ENCODE measurements at regions of chr3 and their contacts with region 1.

Region 1: DNA sequence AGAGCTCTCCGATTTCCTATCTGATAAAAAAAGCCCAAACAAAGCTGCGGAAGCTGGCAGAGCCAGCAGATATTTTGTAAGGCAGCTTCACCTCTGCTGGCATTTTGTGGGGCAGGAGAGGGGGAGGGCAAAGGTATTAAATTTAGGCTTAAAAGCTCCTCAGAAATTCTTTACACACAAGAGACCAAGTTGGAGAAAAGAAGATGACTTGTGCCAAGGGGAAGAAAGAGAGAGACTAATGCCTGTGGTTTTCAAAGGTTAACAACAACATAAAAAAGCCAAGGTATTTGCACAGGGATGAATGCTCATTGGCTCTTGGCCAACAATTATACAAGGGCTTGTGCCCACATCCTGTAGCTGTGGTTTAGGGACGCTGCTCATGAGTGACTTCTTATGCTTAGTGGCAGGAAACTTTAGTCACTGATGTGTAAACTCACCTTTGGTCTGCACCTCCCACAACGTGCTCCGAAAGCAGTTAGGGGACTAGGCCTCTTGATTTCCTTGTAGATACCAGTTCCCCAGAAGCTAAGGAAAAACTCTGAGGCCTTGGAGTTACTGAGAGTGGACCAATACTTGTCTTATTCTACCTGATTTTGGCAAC is 152.9 kb downstream of the TPRG1 start:
- DNase-seq: peak; percentile 92 to 100
- H3K4me3 ChIP-seq: no peak overlapping the region
- H3K27ac ChIP-seq: peak overlapping the region; percentile 89
- H3K4me1 ChIP-seq: peaks cover 40% of the 10 kb centered on the region
- H3K27me3 ChIP-seq: no peaks in the 10 kb centered on the region
- CTCF ChIP-seq: no peak

Region 2: GRCh38 chr3:189292667-189293478 is 31.8 kb before region 1 on chr3:
- CTCF ChIA-PET with region 1: no interaction called
- POLR2A ChIA-PET with region 1: interaction called, 4 read pairs
- intact Hi-C with region 1: loop called (anchors 1 kb)
- DNase-seq: peak; percentile 70 to 82
- H3K4me3 ChIP-seq: no peak overlapping the region
- H3K27ac ChIP-seq: peak overlapping the region; percentile 52
- H3K4me1 ChIP-seq: peaks cover 22% of the 10 kb centered on the region
- H3K27me3 ChIP-seq: no peaks in the 10 kb centered on the region
- CTCF ChIP-seq: no peak

Region 3: GRCh38 chr3:189355481-189356201 is 31.0 kb after region 1 on chr3:
- CTCF ChIA-PET with region 1: no interaction called
- POLR2A ChIA-PET with region 1: interaction called, 3 read pairs
- intact Hi-C with region 1: loop called (anchors 1 kb)
- DNase-seq: peak in 1 of 2 experiments; percentile 44
- H3K4me3 ChIP-seq: no peak overlapping the region
- H3K27ac ChIP-seq: peak overlapping the region; percentile 57
- H3K4me1 ChIP-seq: peaks cover 33% of the 10 kb centered on the region
- H3K27me3 ChIP-seq: no peaks in the 10 kb centered on the region
- CTCF ChIP-seq: no peak

Region 4: DNA sequence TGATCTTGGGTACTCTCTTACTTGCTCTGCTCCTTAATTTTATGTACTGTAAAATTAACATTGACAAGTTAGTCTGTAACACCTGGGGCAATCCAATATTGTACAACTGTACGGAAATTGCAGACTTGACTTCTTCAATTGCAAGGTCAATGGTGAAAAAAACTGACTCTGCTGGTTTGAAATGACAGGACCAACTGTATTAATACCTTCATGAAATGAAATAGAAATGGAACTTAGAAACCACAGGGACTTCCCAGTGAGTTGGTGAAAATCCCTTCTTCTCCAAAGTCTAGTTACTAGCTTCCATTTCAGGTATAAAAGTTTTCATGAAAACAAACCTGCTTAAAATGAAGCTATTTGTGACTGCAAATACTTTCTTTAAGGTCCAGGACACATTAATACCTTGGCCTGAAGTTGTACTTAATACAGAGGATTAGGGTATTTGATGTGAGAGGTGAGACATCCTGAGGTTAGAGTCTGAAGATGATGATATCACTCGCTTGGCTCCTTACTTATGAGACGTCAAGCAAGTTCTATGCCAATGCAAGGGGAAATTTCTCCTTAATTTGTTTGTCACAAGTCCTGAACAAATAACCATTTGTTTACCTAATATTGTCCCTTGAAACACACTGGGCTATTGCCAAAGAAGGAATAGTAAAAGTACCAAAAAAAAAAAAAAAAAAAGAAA is 80.3 kb after region 1 on chr3:
- CTCF ChIA-PET with region 1: no interaction called
- POLR2A ChIA-PET with region 1: no interaction called
- intact Hi-C with region 1: no loop called
- DNase-seq: no peak
- H3K4me3 ChIP-seq: no peak overlapping the region
- H3K27ac ChIP-seq: no peak overlapping the region
- H3K4me1 ChIP-seq: no peaks in the 10 kb centered on the region
- H3K27me3 ChIP-seq: no peaks in the 10 kb centered on the region
- CTCF ChIP-seq: no peak

Region 5: GRCh38 chr3:189512039-189512438 is 187.4 kb after region 1 on chr3:
- CTCF ChIA-PET with region 1: no interaction called
- POLR2A ChIA-PET with region 1: no interaction called
- intact Hi-C with region 1: loop called (anchors 1 kb)
- DNase-seq: no peak
- H3K4me3 ChIP-seq: no peak overlapping the region
- H3K27ac ChIP-seq: peak overlapping the region; percentile 61; the same call in 1 of the 2 replicates
- H3K4me1 ChIP-seq: peaks cover 27% of the 10 kb centered on the region
- H3K27me3 ChIP-seq: no peaks in the 10 kb centered on the region
- CTCF ChIP-seq: no peak

Region 6: DNA sequence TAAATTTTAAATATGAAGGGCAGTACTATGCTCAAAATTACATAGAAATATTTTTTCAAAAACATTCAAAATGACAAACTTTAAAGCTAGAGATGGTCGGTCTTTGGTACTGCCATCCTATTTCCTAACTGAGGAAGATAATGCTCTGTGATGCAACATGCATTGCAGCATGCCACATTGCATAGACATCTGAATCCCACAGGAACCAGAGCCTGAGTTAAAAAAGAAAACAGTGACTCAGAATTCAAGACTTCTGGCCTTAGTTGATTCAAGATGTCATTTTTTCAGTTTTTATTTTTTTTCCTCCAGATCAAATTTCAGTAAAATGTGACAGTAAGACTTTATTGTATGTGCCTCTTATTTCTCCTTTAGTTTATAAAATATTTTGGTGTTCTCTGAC is 339.7 kb after region 1 on chr3:
- CTCF ChIA-PET with region 1: no interaction called
- POLR2A ChIA-PET with region 1: no interaction called
- intact Hi-C with region 1: loop called (anchors 5 kb)
- DNase-seq: peak; percentile 51 to 83
- H3K4me3 ChIP-seq: no peak overlapping the region
- H3K27ac ChIP-seq: peak overlapping the region; percentile 51
- H3K4me1 ChIP-seq: peaks cover 15% of the 10 kb centered on the region
- H3K27me3 ChIP-seq: no peaks in the 10 kb centered on the region
- CTCF ChIP-seq: no peak

Region 7: GRCh38 chr3:189849262-189849661 is 524.6 kb after region 1 on chr3:
- CTCF ChIA-PET with region 1: no interaction called
- POLR2A ChIA-PET with region 1: no interaction called
- intact Hi-C with region 1: no loop called
- DNase-seq: no peak
- H3K4me3 ChIP-seq: no peak overlapping the region
- H3K27ac ChIP-seq: no peak overlapping the region
- H3K4me1 ChIP-seq: no peaks in the 10 kb centered on the region
- H3K27me3 ChIP-seq: no peaks in the 10 kb centered on the region
- CTCF ChIP-seq: no peak

Measured in PC-9 (cell line).